ENCODE measurements at regions of chr10 and their contacts with region 1.

Region 1: GRCh38 chr10:72364239-72364777 is 9.6 kb upstream of the DNAJB12 start:
- DNase-seq: peak; percentile 74
- ATAC-seq: peak; percentile 100
- H3K4me3 Mint-ChIP-seq: peak overlapping the region; percentile 38
- H3K27ac Mint-ChIP-seq: peak overlapping the region; percentile 83
- H3K4me1 Mint-ChIP-seq: peaks cover 13% of the 10 kb centered on the region
- H3K27me3 Mint-ChIP-seq: no peaks in the 10 kb centered on the region
- CTCF ChIP-seq: no peak

Region 2: DNA sequence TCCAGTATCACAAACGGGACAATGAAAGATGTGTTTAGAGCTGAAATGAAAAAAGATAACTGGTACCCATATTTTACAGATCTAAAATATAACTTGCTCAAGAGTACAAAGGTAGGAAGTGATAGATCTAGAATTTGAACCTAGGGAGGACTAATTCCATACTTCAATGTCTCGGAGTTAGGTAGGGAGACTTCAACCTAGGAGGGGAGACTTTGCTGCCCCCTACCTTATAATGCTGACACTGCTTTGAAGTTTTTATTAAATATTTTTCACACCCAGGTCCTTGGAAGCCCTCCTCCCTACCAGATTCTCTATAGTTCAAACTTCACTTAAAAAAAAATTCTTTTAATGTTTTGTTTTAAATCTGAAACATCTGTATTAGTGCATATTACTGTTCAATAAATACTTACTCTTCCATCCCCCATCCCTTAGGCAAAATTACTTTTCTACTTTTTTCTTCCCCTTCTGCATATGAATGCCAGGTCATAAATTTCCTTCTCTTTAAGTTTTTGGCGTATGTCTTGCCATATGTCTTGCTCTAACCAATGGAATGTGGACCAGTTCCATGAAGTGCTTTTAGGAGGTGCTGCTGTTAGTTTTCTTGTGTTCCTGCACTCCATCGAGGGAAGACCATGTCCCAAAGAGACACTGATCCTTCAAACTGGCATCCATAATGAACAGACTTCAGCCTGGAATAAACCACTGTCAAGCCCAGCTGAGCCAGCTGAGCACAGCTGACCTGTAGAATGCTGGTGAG is 203.8 kb after region 1 on chr10:
- CTCF ChIA-PET with region 1: no interaction called
- POLR2A ChIA-PET with region 1: no interaction called
- intact Hi-C with region 1: loop called (anchors 1 kb)
- DNase-seq: no peak
- ATAC-seq: no peak
- H3K4me3 Mint-ChIP-seq: no peak overlapping the region
- H3K27ac Mint-ChIP-seq: no peak overlapping the region
- H3K4me1 Mint-ChIP-seq: peaks cover 11% of the 10 kb centered on the region
- H3K27me3 Mint-ChIP-seq: no peaks in the 10 kb centered on the region
- CTCF ChIP-seq: no peak

Region 3: DNA sequence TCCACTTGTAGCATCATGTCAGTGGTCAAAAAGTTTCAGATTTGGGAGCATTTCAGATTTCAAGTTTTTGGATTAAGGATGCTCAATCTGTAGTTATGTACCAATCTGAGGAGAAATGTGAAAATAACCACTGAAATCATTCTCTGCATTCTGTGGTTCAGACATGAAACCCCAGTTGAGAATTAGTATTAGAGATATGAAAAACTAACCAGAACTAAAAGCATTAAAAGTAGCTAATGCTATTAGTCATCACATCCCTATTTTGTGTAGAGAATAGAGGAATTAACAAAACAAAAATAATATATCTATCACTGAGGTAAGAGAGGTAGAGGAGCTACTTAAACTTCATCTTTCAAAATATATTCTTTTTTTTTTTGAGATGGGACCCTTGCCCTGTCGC is 233.6 kb after region 1 on chr10:
- CTCF ChIA-PET with region 1: no interaction called
- POLR2A ChIA-PET with region 1: no interaction called
- intact Hi-C with region 1: no loop called
- DNase-seq: no peak
- ATAC-seq: no peak
- H3K4me3 Mint-ChIP-seq: no peak overlapping the region
- H3K27ac Mint-ChIP-seq: no peak overlapping the region
- H3K4me1 Mint-ChIP-seq: peaks cover 16% of the 10 kb centered on the region
- H3K27me3 Mint-ChIP-seq: no peaks in the 10 kb centered on the region
- CTCF ChIP-seq: no peak

Region 4: GRCh38 chr10:72625608-72626443 is 261.5 kb after region 1 on chr10 and contains the start of gene MICU1:
- CTCF ChIA-PET with region 1: no interaction called
- POLR2A ChIA-PET with region 1: no interaction called
- intact Hi-C with region 1: loop called (anchors 5 kb)
- DNase-seq: peak; percentile 83
- ATAC-seq: peak; percentile 98
- H3K4me3 Mint-ChIP-seq: peak within 1 kb of the TSS; percentile 100
- H3K27ac Mint-ChIP-seq: peak within 1 kb of the TSS; percentile 97
- H3K4me1 Mint-ChIP-seq: peaks cover 12% of the 10 kb centered on the region
- H3K27me3 Mint-ChIP-seq: no peaks in the 10 kb centered on the region
- CTCF ChIP-seq: no peak
- total RNA-seq, gene MICU1: 27.4 and 34.5 TPM in 2 replicates

Region 5: GRCh38 chr10:72834183-72834825 is 470.0 kb after region 1 on chr10:
- CTCF ChIA-PET with region 1: interaction called, 60 read pairs
- POLR2A ChIA-PET with region 1: interaction called, 8 read pairs
- intact Hi-C with region 1: loop called (anchors 1 kb)
- DNase-seq: no peak
- ATAC-seq: peak; percentile 34
- H3K4me3 Mint-ChIP-seq: no peak overlapping the region
- H3K27ac Mint-ChIP-seq: no peak overlapping the region
- H3K4me1 Mint-ChIP-seq: no peaks in the 10 kb centered on the region
- H3K27me3 Mint-ChIP-seq: no peaks in the 10 kb centered on the region
- CTCF ChIP-seq: no peak

Region 6: GRCh38 chr10:72875250-72876055 is 511.1 kb after region 1 on chr10:
- CTCF ChIA-PET with region 1: interaction called, 7 read pairs
- POLR2A ChIA-PET with region 1: interaction called, 10 read pairs
- intact Hi-C with region 1: loop called (anchors 1 kb)
- DNase-seq: no peak
- ATAC-seq: no peak
- H3K4me3 Mint-ChIP-seq: no peak overlapping the region
- H3K27ac Mint-ChIP-seq: no peak overlapping the region
- H3K4me1 Mint-ChIP-seq: peaks cover 5% of the 10 kb centered on the region
- H3K27me3 Mint-ChIP-seq: no peaks in the 10 kb centered on the region
- CTCF ChIP-seq: no peak

Region 7: DNA sequence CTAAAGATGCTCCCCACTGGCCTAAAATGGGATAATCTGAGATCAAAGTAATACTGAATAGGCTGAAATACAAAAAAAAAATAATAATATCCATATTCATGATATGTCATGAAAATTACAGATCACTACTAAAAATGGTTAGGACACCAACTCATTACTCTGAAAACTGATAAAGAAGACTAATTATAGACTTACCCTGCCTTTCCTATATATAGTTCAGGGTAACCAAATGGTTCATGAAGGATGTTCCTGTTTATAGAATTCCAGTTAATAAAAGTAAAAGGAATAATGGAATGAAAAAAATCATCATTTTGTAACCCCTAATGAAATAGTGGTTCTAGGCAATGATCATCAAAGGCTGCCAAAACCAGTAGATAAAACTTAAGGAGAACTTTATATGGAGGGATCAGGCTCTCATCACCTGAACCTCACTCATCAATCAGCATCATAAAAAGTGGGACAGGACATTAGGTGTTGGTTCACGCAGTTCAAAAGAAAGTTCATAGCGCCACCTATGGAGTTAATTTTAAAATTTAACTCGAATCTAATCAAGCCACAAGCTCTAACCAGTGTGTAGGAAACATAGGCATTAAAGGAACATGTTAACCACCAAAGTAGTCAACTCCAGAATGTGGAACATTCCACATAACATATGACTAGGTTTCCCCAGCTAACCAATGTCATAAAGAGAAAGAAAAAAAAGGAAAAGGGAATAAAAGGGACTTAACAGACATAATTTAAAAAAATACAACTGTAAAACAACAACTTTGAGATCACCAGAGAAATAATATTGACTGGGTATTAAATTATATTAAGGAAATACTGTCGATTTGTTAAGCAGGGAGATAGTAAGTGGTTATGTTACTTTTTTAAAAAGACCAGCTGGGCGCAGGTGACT is 696.7 kb after region 1 on chr10:
- CTCF ChIA-PET with region 1: interaction called, 9 read pairs
- POLR2A ChIA-PET with region 1: no interaction called
- intact Hi-C with region 1: loop called (anchors 1 kb)
- DNase-seq: no peak
- ATAC-seq: no peak
- H3K4me3 Mint-ChIP-seq: no peak overlapping the region
- H3K27ac Mint-ChIP-seq: no peak overlapping the region
- H3K4me1 Mint-ChIP-seq: peaks cover 1% of the 10 kb centered on the region
- H3K27me3 Mint-ChIP-seq: no peaks in the 10 kb centered on the region
- CTCF ChIP-seq: no peak

Region 8: DNA sequence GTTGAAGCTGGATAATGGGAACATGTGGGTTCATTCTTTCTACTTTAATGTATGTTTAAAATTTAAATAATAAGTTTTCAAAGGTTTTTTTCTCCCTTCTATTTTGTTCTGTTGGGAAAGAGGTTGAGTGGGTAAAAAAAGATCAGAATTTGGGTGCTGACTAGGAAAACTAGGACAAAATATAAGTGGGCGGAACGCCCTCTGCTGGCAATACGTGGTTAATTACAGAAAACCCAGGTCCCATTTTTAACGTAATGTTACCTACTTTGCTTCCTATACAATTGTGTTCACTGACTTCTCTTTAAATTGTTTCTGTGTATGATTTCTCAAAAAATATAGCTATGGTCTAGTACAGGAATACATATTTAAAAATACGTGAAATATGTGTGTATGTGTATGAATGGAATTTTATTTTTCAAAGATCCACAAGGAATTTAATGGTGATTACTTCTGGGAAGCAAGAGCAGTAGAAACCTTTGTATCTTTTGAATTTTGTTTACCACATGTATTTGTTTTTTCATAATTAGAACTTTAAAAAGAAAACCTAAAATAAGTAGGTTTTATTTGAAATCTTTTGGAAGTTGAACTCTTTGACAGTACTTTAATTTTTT is 794.8 kb after region 1 on chr10:
- CTCF ChIA-PET with region 1: interaction called, 5 read pairs
- POLR2A ChIA-PET with region 1: no interaction called
- intact Hi-C with region 1: loop called (anchors 1 kb)
- DNase-seq: peak; percentile 23
- ATAC-seq: peak; percentile 37
- H3K4me3 Mint-ChIP-seq: no peak overlapping the region
- H3K27ac Mint-ChIP-seq: no peak overlapping the region
- H3K4me1 Mint-ChIP-seq: peaks cover 18% of the 10 kb centered on the region
- H3K27me3 Mint-ChIP-seq: no peaks in the 10 kb centered on the region
- CTCF ChIP-seq: peak; percentile 70

Measured in activated B cell treated with CpG ODN at 0.5 μM for 24 hours (primary cell).